Activated T-helper 2 cell treated with anti-CD3 and anti-CD28 coated beads, Interferon-gamma antibody, Interleukin-2, Interleukin-4, amounts not matched to agents 10 μg/mL and 5 μg/mL and 100 μg/mL, durations not matched to agents 14 hours and 24 hours and 36 hours (primary cell): ENCODE measurements at regions of chr6 and their contacts with region 1.

Region 1: GRCh38 chr6:16319813-16320532 is 81.6 kb downstream of the GMPR start:
- DNase-seq: peak; percentile 65
- H3K4me3 Mint-ChIP-seq: peak overlapping the region; percentile 60
- H3K27ac Mint-ChIP-seq: peak overlapping the region; percentile 84
- H3K4me1 Mint-ChIP-seq: peaks cover 68% of the 10 kb centered on the region
- H3K27me3 Mint-ChIP-seq: no peaks in the 10 kb centered on the region

Region 2: DNA sequence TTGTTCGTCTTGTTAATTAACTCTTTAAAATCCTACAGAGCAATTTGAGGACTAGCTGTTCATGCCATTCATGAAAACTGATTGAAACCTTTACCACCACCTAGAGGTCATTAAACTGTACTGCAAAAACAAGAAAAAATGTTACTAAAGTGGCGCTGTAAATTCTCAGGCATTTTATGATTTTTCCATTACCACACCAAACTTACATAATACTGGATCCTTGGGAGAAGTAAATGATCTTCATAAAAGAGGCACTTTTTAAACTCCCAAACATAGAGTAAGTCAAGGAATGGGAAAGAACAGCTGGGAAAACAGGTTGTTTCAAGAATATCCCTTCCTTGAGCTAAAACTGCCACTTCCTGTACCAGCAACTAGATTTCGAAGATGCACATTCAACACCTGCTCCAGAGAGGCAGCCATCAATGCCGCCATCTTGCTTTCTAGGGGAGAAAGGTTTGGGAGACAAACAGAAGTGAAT is 136.7 kb before region 1 on chr6:
- intact Hi-C with region 1: no loop called
- DNase-seq: no peak
- H3K4me3 Mint-ChIP-seq: no peak overlapping the region
- H3K27ac Mint-ChIP-seq: peak overlapping the region; percentile 37
- H3K4me1 Mint-ChIP-seq: peaks cover 28% of the 10 kb centered on the region
- H3K27me3 Mint-ChIP-seq: peaks cover 11% of the 10 kb centered on the region

Region 3: GRCh38 chr6:16238057-16238962 is 81.7 kb before region 1 on chr6 and contains the start of gene GMPR:
- intact Hi-C with region 1: loop called (anchors 5 kb)
- DNase-seq: peak; percentile 78
- H3K4me3 Mint-ChIP-seq: peak within 1 kb of the TSS; percentile 78
- H3K27ac Mint-ChIP-seq: no peak within 1 kb of the TSS
- H3K4me1 Mint-ChIP-seq: peaks cover 24% of the 10 kb centered on the region
- H3K27me3 Mint-ChIP-seq: peaks cover 51% of the 10 kb centered on the region
- total RNA-seq, gene GMPR: 1.0 and 1.1 TPM in 2 replicates

Region 4: DNA sequence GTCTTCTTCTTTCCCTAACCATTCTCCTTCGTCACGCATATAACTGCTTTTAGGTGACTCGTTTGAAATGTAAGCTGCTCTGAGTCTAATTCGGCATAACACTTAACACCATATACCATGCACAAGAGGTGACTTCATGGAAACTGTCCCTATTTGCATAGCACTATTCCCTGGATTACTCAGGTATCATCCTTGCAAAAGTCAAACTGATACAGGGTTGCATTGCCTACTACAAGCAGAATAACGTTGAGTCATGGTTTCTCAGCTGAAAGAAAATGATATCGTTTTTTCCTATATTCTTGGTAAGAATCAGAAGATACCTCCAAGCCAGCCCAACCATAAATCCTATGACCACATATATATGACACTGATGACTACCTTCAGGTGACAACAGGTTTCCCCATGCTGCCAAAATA is 213.8 kb after region 1 on chr6:
- intact Hi-C with region 1: loop called (anchors 5 kb)
- DNase-seq: no peak
- H3K4me3 Mint-ChIP-seq: no peak overlapping the region
- H3K27ac Mint-ChIP-seq: peak overlapping the region; percentile 52
- H3K4me1 Mint-ChIP-seq: peaks cover 36% of the 10 kb centered on the region
- H3K27me3 Mint-ChIP-seq: no peaks in the 10 kb centered on the region

Region 5: DNA sequence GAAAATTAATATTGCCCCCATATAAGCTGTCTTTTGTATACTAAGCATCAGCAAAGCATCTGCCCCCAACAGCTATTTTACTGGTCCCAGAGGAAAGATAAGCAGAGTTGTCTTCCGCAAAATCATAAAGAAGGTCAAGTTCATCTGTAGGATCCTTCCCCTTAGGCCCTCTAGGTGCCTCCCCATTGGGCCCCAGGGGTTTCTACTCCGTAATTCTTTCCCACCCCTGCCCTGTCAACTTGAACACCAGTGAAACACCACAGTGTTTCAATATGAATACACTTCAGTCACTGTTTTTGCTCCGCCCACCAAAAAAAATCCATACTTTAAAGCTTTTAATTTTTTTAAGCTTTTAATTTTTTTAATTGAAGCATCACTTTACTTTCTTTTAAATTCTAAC is 282.1 kb after region 1 on chr6:
- intact Hi-C with region 1: loop called (anchors 5 kb)
- DNase-seq: peak; percentile 13
- H3K4me3 Mint-ChIP-seq: no peak overlapping the region
- H3K27ac Mint-ChIP-seq: peak overlapping the region; percentile 74
- H3K4me1 Mint-ChIP-seq: peaks cover 37% of the 10 kb centered on the region
- H3K27me3 Mint-ChIP-seq: no peaks in the 10 kb centered on the region

Region 6: GRCh38 chr6:16684896-16685554 is 365.1 kb after region 1 on chr6:
- intact Hi-C with region 1: loop called (anchors 5 kb)
- DNase-seq: peak; percentile 49
- H3K4me3 Mint-ChIP-seq: no peak overlapping the region
- H3K27ac Mint-ChIP-seq: peak overlapping the region; percentile 86
- H3K4me1 Mint-ChIP-seq: peaks cover 83% of the 10 kb centered on the region
- H3K27me3 Mint-ChIP-seq: no peaks in the 10 kb centered on the region